ENCODE measurements at regions of chr14 and their contacts with region 1.

Region 1: GRCh38 chr14:61475316-61475715 is 153.9 kb downstream of the PRKCH start:
- DNase-seq: peak; percentile 43
- H3K4me3 ChIP-seq: no peak overlapping the region
- H3K27ac ChIP-seq: no peak overlapping the region
- H3K27me3 ChIP-seq: no peaks in the 10 kb centered on the region
- CTCF ChIP-seq: peak; percentile 60

Region 2: GRCh38 chr14:61498811-61499210 is 23.5 kb after region 1 on chr14:
- CTCF ChIA-PET with region 1: interaction called, 12 read pairs
- POLR2A ChIA-PET with region 1: interaction called, 3 read pairs
- DNase-seq: peak; percentile 24
- H3K4me3 ChIP-seq: no peak overlapping the region
- H3K27ac ChIP-seq: no peak overlapping the region
- H3K27me3 ChIP-seq: no peaks in the 10 kb centered on the region
- CTCF ChIP-seq: no peak

Region 3: DNA sequence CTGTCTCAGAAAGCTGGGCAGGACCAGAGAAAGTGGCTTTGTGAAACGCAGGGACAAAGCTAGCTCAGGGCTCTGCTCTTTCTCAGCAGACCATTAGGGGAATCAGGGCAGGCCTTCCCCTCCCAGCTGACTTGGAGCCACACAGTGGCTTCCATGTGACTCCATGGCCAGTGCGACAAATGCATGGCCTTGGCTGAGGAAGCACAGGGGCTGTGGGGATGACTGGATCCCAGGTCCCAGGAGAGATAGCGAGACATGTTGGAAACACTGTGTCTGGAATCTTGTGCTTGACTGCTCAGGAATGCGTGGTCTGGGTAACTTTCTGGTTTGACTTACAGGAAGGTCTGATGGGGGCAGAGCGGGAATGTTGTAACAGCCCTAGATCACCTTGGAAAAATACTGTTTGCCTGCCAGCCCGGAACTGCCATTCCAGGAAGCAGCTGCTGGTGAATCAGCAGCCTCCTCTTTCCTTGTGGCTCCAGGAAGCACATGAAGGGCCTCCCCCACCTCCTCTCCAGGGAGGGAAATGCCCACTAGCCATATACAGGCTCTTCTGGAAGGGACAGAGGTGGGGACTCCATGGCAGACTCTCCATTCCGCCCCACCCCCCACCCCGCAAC is 86.5 kb after region 1 on chr14:
- CTCF ChIA-PET with region 1: interaction called, 11 read pairs
- POLR2A ChIA-PET with region 1: interaction called, 4 read pairs
- DNase-seq: peak; percentile 96
- H3K4me3 ChIP-seq: no peak overlapping the region
- H3K27ac ChIP-seq: peak overlapping the region; percentile 98
- H3K27me3 ChIP-seq: no peaks in the 10 kb centered on the region
- CTCF ChIP-seq: no peak

Region 4: GRCh38 chr14:61719344-61720293 is 244.3 kb after region 1 on chr14:
- CTCF ChIA-PET with region 1: interaction called, 14 read pairs
- POLR2A ChIA-PET with region 1: no interaction called
- DNase-seq: no peak
- H3K4me3 ChIP-seq: no peak overlapping the region
- H3K27ac ChIP-seq: no peak overlapping the region
- H3K27me3 ChIP-seq: no peaks in the 10 kb centered on the region
- CTCF ChIP-seq: no peak

Region 5: GRCh38 chr14:61803755-61804154 is 328.4 kb after region 1 on chr14:
- CTCF ChIA-PET with region 1: no interaction called
- POLR2A ChIA-PET with region 1: no interaction called
- DNase-seq: no peak
- H3K4me3 ChIP-seq: no peak overlapping the region
- H3K27ac ChIP-seq: no peak overlapping the region
- H3K27me3 ChIP-seq: no peaks in the 10 kb centered on the region
- CTCF ChIP-seq: no peak

Region 6: GRCh38 chr14:62117010-62117750 is 641.9 kb after region 1 on chr14:
- CTCF ChIA-PET with region 1: no interaction called
- POLR2A ChIA-PET with region 1: no interaction called
- DNase-seq: peak; percentile 58
- H3K4me3 ChIP-seq: peak overlapping the region; percentile 63
- H3K27ac ChIP-seq: no peak overlapping the region
- H3K27me3 ChIP-seq: peaks cover 25% of the 10 kb centered on the region
- CTCF ChIP-seq: peak; percentile 51

Measured in AG04450 (cell line).